ENCODE measurements at regions of chr6 and their contacts with region 1.

Region 1: DNA sequence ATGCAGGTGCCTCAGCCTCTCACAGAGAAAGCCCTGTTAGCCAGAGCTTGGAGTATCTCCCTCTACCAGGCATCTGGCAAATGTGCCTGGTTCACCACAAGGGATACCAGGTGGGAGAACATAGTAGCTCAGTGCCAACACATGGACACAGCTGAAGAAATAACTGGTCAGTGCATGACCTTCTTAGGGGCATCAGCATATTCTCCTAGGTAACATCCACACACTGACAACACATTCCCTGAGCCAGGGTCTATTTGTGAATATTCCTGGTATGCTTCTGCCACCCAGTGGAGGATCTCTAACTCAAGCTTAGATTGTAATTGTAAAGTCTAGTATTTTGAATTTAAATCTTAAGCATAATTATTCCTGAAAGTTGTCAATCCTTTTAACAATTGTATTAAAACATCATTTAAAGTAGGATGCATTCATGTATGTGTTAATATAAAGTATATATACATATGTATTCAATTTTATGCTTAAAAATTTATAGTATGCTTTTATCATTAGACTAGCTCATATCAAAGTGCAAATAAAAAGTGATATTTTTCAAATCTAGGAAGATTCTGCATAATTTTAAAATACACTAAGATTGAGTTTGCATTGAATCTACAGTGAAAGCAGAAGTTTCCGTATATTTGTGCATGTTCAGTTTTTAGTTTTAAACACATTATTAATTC is 45.3 kb upstream of the COL21A1 start:
- DNase-seq: peak in 19 of 42 donors; percentile 9 to 65 (median 42)

Region 2: DNA sequence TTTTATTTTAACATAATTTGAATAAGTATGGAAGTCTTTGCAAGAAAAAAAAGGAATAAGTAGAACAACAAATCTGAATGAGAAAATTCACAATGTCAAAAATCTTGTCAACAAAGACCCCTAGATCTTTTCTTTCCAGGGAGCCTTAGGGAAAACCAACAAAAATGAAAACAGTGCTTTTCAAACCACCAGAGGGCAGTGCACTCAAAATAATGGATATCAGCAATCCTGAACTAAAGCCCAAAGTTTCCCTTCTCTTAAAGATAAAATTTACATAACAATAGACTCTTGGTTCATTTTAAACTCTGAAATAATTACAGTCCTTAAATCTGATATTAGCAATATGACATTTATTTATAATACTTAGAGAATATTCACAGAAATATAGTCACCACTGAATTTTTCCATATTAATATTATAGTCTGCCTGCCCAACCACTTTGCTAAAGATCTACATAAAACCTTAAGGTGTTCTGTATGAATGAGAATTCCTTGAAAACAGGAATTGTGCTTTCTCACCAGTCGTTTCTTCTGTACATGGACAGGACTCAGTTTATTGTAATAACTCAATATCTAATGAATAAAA is 311.9 kb before region 1 on chr6:
- intact Hi-C with region 1: loop called (anchors 10 kb)
- DNase-seq: peak in 22 of 42 donors; percentile 2 to 74 (median 40)

Measured in head of caudate nucleus (tissue), 42 donors.